BJ (cell line): ENCODE measurements at regions of chr2 and their contacts with region 1.

Region 1: GRCh38 chr2:219452838-219453317 is 18.2 kb downstream of the SPEG start:
- DNase-seq: peak; percentile 78
- H3K4me3 ChIP-seq: no peak overlapping the region
- H3K27me3 ChIP-seq: no peaks in the 10 kb centered on the region
- CTCF ChIP-seq: no peak

Region 2: GRCh38 chr2:219441451-219442255 is 11.2 kb before region 1 on chr2:
- CTCF ChIA-PET with region 1: interaction called, 4 read pairs
- POLR2A ChIA-PET with region 1: interaction called, 15 read pairs
- DNase-seq: no peak
- H3K4me3 ChIP-seq: peak overlapping the region; percentile 68
- H3K27me3 ChIP-seq: no peaks in the 10 kb centered on the region
- CTCF ChIP-seq: no peak

Region 3: GRCh38 chr2:219521066-219521880 is 68.4 kb after region 1 on chr2:
- CTCF ChIA-PET with region 1: interaction called, 12 read pairs
- POLR2A ChIA-PET with region 1: interaction called, 8 read pairs
- DNase-seq: no peak
- H3K4me3 ChIP-seq: no peak overlapping the region
- H3K27me3 ChIP-seq: peaks cover 1% of the 10 kb centered on the region; the same call in 1 of the 2 replicates
- CTCF ChIP-seq: peak; percentile 96